IMR-90 (cell line): ENCODE measurements at regions of chr16 and their contacts with region 1.

Region 1: DNA sequence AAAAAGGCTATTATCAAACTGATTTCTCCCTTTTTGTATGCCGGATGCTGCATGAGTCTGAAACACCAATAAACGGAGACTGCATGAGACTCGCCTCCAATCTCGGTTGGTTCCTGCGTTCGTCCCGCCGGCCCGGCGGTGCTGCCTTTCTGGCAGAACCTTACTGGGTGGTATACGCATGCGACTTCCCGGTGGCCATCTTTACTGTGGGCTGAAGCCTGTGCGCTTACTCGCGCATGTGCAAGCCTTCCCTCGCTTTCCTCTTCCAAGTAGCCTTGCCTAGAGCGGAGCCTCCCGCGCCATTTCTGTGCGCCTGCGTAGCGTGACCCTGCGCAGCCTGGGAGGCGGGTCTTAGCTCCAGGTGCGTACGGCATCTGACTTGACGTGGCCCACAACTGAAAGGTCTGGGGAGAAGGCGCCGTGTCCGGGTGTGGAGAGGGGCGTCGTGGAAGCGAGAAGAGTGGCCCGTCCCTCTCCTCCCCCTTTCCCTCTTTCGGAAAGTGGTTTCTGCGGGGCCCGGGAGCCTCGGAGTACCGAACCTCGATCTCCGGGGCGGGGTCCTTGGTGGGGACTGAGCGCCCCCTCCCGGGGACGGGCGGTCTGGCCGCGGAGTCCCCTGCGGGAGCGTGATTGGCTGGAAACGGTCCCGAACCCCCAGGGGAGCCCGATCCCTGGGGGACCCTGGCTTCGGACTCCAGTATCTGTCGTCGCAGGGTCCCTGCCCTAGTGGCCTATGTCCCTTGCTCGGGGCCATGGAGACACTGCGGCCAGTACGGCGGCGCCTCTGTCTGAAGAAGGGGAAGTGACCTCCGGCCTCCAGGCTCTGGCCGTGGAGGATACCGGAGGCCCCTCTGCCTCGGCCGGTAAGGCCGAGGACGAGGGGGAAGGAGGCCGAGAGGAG is at the start of gene PAGR1:
- DNase-seq: peak; percentile 100
- ATAC-seq: peak; percentile 68
- H3K4me3 ChIP-seq: peak within 1 kb of the TSS; percentile 62
- H3K27ac ChIP-seq: peak within 1 kb of the TSS; percentile 89
- H3K4me1 ChIP-seq: peaks cover 14% of the 10 kb centered on the region
- H3K27me3 ChIP-seq: no peaks in the 10 kb centered on the region
- CTCF ChIP-seq: peak; percentile 90
- POLR2A ChIP-seq: peak; percentile 49; the same call in 1 of the 2 replicates
- RAD21 ChIP-seq: peak; percentile 80
- total RNA-seq, gene PAGR1: 10.6 and 15.3 TPM in 2 replicates

Region 2: DNA sequence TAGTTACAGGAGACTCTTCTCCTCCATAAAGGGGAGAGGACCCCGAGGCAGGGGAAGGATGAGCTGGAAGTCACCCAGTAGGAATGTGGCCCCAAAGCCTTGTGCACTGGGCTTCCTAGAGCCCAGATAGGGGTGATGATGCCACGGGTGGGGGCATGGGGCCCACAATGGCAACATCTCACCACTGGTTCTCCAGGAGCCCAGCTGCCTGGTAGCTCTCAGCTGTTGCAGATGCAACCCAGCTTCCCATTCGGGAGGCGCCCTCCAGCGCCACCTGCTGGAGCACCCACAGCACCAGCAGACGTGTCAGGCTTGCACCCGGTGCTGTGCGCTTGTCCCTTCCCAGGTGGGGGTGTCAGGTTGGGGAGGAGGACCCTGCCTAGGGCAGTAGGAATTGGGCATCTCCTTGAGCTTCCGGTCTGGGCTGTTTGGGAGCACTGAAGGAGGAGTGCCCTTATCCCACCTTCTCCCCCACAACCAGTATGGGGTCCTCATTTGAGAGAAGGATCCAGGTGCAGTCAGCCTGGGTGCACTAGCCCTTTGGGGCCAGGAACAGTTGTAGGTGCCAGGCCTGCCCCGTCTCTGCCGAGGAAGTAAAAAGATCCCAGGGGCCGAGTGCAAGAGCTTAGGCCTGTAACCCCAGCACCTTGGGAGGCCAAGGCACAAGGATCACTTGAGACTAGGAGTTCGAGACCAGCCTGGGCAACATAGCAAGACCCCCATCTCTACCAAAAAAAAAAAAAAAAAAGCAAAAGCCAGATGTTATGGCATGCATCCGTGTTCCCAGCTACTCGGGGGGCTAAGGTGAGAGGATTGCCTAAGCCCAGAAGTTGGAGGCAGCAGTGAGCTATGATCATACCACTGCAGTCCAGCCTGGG is 32.6 kb after region 1 on chr16:
- CTCF ChIA-PET with region 1: interaction called, 10 read pairs
- POLR2A ChIA-PET with region 1: interaction called, 5 read pairs
- dilution Hi-C with region 1: no loop called
- in situ Hi-C with region 1: no loop called
- intact Hi-C with region 1: no loop called
- DNase-seq: peak; percentile 63
- ATAC-seq: peak; percentile 84
- H3K4me3 ChIP-seq: no peak overlapping the region
- H3K27ac ChIP-seq: no peak overlapping the region
- H3K4me1 ChIP-seq: no peaks in the 10 kb centered on the region; the same call in 1 of the 2 replicates
- H3K27me3 ChIP-seq: no peaks in the 10 kb centered on the region
- CTCF ChIP-seq: peak; percentile 74
- POLR2A ChIP-seq: no peak
- RAD21 ChIP-seq: peak; percentile 76

Region 3: DNA sequence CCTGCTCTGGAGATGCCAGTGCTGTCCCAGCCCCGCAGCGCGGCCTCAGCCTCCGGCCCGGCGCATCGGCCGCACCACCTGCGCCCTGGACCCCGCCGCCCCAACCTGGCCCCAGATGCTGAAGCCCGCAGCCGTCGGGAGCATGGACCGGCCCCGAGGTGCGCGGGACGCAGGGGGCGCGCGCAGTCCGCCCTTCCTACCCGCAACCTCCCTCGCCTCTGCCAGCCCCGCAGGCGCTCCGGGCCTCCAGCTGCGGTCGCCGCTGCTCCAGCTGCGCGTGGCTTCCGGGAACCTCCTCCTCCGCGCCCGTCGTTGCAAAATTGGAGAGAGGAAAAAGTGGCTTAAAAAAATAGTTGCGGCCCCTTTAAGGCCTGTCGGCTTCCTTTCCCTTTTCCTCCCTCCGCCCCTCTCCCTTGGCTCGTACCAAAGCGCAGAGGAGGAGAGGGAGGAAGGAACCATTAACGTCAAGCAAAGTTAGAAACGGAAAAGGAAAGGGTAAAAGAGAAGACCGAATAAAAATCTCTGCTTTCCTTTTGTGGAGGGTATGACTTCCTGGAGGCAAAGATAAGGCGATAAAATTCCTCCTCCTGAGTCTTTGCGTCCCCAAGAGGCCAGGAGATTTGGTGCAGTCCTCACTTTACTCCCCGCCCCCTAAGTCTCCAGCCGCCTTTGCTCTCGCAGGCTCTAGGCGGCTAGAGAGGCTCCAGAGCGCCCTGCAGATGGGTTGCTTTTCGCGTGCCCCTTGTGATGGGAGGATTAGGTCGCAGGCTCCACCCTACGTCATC is 47.0 kb after region 1 on chr16 and contains the start of gene CDIPT:
- CTCF ChIA-PET with region 1: no interaction called
- POLR2A ChIA-PET with region 1: interaction called, 15 read pairs
- dilution Hi-C with region 1: no loop called
- in situ Hi-C with region 1: no loop called
- intact Hi-C with region 1: loop called (anchors 5 kb)
- DNase-seq: peak; percentile 97
- ATAC-seq: peak; percentile 98
- H3K4me3 ChIP-seq: peak within 1 kb of the TSS; percentile 77
- H3K27ac ChIP-seq: peak within 1 kb of the TSS; percentile 86
- H3K4me1 ChIP-seq: peaks cover 3% of the 10 kb centered on the region; the same call in 1 of the 2 replicates
- H3K27me3 ChIP-seq: no peaks in the 10 kb centered on the region
- CTCF ChIP-seq: peak; percentile 82
- POLR2A ChIP-seq: no peak
- RAD21 ChIP-seq: peak; percentile 33
- total RNA-seq, gene CDIPT: 47.1 and 48.3 TPM in 2 replicates

Region 4: DNA sequence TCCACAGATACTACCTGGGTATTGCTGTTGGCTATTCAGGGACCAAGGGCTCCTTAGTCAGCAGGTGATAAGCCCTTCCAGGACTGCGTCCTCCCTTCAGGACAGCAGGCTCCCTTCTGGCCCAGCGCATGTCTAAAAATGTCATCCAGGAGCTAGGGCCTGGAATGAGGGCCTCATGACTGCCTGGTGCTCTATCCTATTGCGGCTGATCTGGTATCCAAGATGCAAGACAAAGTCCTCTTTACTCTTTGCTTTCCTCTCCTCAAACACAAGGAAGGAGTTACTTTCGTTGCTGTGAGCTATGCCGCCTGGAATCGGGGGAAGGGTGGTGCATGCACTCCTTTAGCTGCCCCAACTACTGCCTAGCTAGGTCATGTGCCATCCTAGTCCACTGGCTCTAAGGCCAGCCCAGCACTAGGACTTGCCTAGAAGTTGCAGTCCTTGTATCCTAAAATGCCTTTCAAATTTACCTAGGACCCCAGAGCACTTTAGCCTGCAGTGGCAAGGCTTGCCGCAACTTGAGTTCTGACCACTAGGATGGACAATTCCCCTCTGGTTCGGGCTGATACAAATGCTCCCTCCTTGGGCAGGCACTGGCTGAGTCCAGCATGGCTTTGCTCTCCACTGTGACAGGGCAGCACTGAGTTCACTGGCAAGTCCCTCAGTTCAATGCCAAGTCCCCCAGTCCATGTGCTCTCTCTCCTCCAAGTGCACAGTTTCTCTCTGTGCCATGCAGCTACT is 135.8 kb after region 1 on chr16:
- CTCF ChIA-PET with region 1: no interaction called
- POLR2A ChIA-PET with region 1: no interaction called
- dilution Hi-C with region 1: no loop called
- in situ Hi-C with region 1: no loop called
- intact Hi-C with region 1: no loop called
- DNase-seq: no peak
- ATAC-seq: no peak; the same call in 1 of the 2 replicates
- H3K4me3 ChIP-seq: no peak overlapping the region
- H3K27ac ChIP-seq: no peak overlapping the region
- H3K4me1 ChIP-seq: no peaks in the 10 kb centered on the region
- H3K27me3 ChIP-seq: no peaks in the 10 kb centered on the region
- CTCF ChIP-seq: no peak
- POLR2A ChIP-seq: no peak
- RAD21 ChIP-seq: no peak

Region 5: GRCh38 chr16:29995911-29996772 is 180.1 kb after region 1 on chr16 and contains the start of gene INO80E:
- CTCF ChIA-PET with region 1: interaction called, 4 read pairs
- POLR2A ChIA-PET with region 1: no interaction called
- dilution Hi-C with region 1: no loop called
- in situ Hi-C with region 1: no loop called
- intact Hi-C with region 1: loop called (anchors 2 kb)
- DNase-seq: peak; percentile 93
- ATAC-seq: peak; percentile 98
- H3K4me3 ChIP-seq: peak within 1 kb of the TSS; percentile 65
- H3K27ac ChIP-seq: peak within 1 kb of the TSS; percentile 79
- H3K4me1 ChIP-seq: peaks cover 8% of the 10 kb centered on the region
- H3K27me3 ChIP-seq: no peaks in the 10 kb centered on the region
- CTCF ChIP-seq: no peak
- POLR2A ChIP-seq: peak; percentile 69
- RAD21 ChIP-seq: peak; percentile 1; the same call in 1 of the 2 replicates
- total RNA-seq, gene INO80E: 42.1 and 42.8 TPM in 2 replicates

Region 6: DNA sequence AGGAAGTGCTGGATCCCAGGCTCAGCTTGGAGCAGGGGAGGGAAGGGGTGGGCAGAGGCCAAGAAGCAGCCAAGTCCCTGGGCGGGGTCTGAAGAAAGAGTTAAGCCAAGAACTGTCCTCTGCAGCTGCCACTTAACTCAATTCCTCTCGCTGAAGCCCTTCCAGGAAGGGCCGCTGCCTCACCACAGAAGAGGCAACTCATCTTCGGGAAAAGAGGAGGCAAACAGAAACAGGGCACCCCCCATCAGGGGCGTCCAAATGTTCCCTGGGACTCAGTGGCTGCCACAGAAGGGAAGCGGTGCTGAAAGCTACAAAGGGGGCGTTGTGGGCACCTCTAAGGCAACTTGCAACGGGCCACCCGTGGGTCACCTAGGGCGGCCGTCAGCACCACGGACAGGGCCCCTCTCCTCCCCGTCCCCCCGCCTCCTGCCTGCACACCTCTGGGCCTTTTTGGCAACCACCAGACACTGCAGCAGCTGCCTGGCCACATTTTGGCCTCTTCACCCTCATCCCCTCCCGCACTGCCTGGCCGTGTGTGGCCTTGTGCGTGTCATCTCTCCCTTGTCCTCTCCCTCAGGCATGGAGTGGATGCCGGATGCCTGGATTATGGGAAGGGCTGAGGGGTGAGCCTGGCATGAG is 212.5 kb after region 1 on chr16:
- CTCF ChIA-PET with region 1: no interaction called
- POLR2A ChIA-PET with region 1: no interaction called
- dilution Hi-C with region 1: no loop called
- in situ Hi-C with region 1: no loop called
- intact Hi-C with region 1: loop called (anchors 5 kb)
- DNase-seq: no peak
- ATAC-seq: peak; percentile 60
- H3K4me3 ChIP-seq: no peak overlapping the region
- H3K27ac ChIP-seq: no peak overlapping the region
- H3K4me1 ChIP-seq: no peaks in the 10 kb centered on the region
- H3K27me3 ChIP-seq: peaks cover 70% of the 10 kb centered on the region
- CTCF ChIP-seq: no peak
- POLR2A ChIP-seq: no peak
- RAD21 ChIP-seq: no peak